ENCODE measurements at regions of chr1 and their contacts with region 1.

Region 1: DNA sequence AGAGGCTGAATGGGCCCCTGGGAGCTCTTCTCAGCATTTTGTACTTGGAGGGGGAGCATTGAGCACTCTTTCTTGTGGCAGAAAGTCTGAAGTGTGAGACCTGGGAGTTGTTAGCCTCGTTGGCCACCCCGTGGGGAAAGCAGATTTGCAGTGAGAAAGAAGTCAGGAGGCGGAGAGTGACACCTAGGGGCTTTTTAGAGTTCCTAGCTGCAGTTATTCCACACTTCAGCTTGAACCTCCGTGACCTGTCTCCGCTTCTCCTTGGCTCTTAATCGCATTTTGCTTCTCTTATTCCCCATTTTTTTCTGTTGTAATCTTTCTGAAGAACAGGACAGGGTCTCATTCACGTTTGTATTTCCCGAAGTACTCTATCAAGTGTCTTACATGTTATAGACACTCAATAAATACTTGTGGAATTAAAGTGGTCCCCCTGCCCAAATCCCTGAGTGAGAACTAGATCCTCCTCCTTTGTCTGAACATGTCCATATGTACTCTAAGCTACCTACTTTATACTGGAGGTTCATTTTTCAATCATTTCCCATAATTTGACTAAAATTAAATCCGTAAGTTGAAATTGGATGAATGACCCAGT is 14.5 kb upstream of the C1orf141 start:
- DNase-seq: peak in 1 of 2 donors; percentile 62
- H3K4me3 ChIP-seq: no peak overlapping the region
- CTCF ChIP-seq: peak in 1 of 3 donors; percentile 70
- POLR2A ChIP-seq: no peak

Region 2: GRCh38 chr1:65467536-65467935 is 1681.7 kb before region 1 on chr1:
- intact Hi-C with region 1: no loop called
- DNase-seq: no peak
- H3K4me3 ChIP-seq: no peak overlapping the region
- CTCF ChIP-seq: no peak
- POLR2A ChIP-seq: no peak

Region 3: GRCh38 chr1:66764994-66765578 is 384.2 kb before region 1 on chr1:
- intact Hi-C with region 1: loop called (anchors 10 kb)
- DNase-seq: no peak
- H3K4me3 ChIP-seq: no peak overlapping the region
- CTCF ChIP-seq: peak in 1 of 3 donors; percentile 43
- POLR2A ChIP-seq: no peak

Region 4: GRCh38 chr1:66996018-66996682 is 153.1 kb before region 1 on chr1:
- intact Hi-C with region 1: loop called (anchors 10 kb)
- DNase-seq: peak in 1 of 2 donors; percentile 59
- H3K4me3 ChIP-seq: no peak overlapping the region
- CTCF ChIP-seq: no peak
- POLR2A ChIP-seq: no peak

Measured in lower leg skin (tissue), 4 donors.